ENCODE measurements at regions of chr1 and their contacts with region 1.

Region 1: DNA sequence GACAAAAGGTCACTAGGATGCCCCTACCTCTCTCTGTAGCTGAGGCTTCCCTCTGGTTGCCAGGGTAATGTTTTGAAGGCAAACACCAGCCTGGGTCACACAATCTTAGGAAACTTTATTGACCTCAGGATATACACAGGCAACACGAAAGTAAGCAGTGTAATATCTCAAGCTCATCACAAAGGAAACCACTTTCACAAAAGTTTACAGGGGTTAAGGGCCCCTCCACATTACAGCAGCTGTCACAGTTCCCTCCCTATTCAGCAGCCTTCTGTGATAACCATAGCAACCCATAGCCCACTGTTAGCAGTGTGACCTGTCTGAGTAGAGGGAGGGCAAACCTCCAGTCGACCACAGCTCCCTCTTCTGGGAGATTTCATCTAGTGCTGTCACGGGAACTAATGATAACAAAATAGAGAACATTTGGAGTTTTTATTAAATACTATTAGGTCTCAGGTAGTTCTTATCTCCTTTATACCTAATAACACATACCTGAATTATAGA is 149.8 kb downstream of the PTPRC start:
- DNase-seq: peak; percentile 32 to 49
- H3K4me3 ChIP-seq: no peak overlapping the region
- H3K4me3 Mint-ChIP-seq: no peak overlapping the region
- H3K27ac Mint-ChIP-seq: peak overlapping the region; percentile 32
- H3K4me1 ChIP-seq: peaks cover 4% of the 10 kb centered on the region; the same call in 1 of the 2 replicates
- H3K4me1 Mint-ChIP-seq: no peaks in the 10 kb centered on the region
- H3K27me3 ChIP-seq: no peaks in the 10 kb centered on the region
- H3K27me3 Mint-ChIP-seq: no peaks in the 10 kb centered on the region
- CTCF ChIP-seq: peak in 1 of 2 experiments; percentile 25

Region 2: GRCh38 chr1:198756470-198756869 is 32.1 kb before region 1 on chr1:
- CTCF ChIA-PET with region 1: no interaction called
- POLR2A ChIA-PET with region 1: no interaction called
- intact Hi-C with region 1: loop called (anchors 1 kb)
- DNase-seq: no peak
- H3K4me3 ChIP-seq: no peak overlapping the region
- H3K4me3 Mint-ChIP-seq: no peak overlapping the region
- H3K27ac Mint-ChIP-seq: no peak overlapping the region
- H3K4me1 ChIP-seq: no peaks in the 10 kb centered on the region
- H3K4me1 Mint-ChIP-seq: peaks cover 5% of the 10 kb centered on the region
- H3K27me3 ChIP-seq: no peaks in the 10 kb centered on the region
- H3K27me3 Mint-ChIP-seq: peaks cover 8% of the 10 kb centered on the region
- CTCF ChIP-seq: no peak

Region 3: GRCh38 chr1:198856601-198857000 is 68.0 kb after region 1 on chr1:
- CTCF ChIA-PET with region 1: no interaction called
- POLR2A ChIA-PET with region 1: no interaction called
- intact Hi-C with region 1: loop called (anchors 2 kb)
- DNase-seq: peak; percentile 51 to 65
- H3K4me3 ChIP-seq: no peak overlapping the region
- H3K4me3 Mint-ChIP-seq: no peak overlapping the region
- H3K27ac Mint-ChIP-seq: peak overlapping the region; percentile 14
- H3K4me1 ChIP-seq: peaks cover 22% of the 10 kb centered on the region
- H3K4me1 Mint-ChIP-seq: peaks cover 17% of the 10 kb centered on the region
- H3K27me3 ChIP-seq: no peaks in the 10 kb centered on the region
- H3K27me3 Mint-ChIP-seq: no peaks in the 10 kb centered on the region
- CTCF ChIP-seq: no peak

Region 4: GRCh38 chr1:198907423-198907746 is 118.8 kb after region 1 on chr1:
- CTCF ChIA-PET with region 1: no interaction called
- POLR2A ChIA-PET with region 1: no interaction called
- intact Hi-C with region 1: no loop called
- DNase-seq: no peak
- H3K4me3 ChIP-seq: no peak overlapping the region
- H3K4me3 Mint-ChIP-seq: no peak overlapping the region
- H3K27ac Mint-ChIP-seq: no peak overlapping the region
- H3K4me1 ChIP-seq: no peaks in the 10 kb centered on the region
- H3K4me1 Mint-ChIP-seq: no peaks in the 10 kb centered on the region
- H3K27me3 ChIP-seq: no peaks in the 10 kb centered on the region
- H3K27me3 Mint-ChIP-seq: no peaks in the 10 kb centered on the region
- CTCF ChIP-seq: no peak